HAP-1 (cell line): ENCODE measurements at regions of chr11 and their contacts with region 1.

Region 1: DNA sequence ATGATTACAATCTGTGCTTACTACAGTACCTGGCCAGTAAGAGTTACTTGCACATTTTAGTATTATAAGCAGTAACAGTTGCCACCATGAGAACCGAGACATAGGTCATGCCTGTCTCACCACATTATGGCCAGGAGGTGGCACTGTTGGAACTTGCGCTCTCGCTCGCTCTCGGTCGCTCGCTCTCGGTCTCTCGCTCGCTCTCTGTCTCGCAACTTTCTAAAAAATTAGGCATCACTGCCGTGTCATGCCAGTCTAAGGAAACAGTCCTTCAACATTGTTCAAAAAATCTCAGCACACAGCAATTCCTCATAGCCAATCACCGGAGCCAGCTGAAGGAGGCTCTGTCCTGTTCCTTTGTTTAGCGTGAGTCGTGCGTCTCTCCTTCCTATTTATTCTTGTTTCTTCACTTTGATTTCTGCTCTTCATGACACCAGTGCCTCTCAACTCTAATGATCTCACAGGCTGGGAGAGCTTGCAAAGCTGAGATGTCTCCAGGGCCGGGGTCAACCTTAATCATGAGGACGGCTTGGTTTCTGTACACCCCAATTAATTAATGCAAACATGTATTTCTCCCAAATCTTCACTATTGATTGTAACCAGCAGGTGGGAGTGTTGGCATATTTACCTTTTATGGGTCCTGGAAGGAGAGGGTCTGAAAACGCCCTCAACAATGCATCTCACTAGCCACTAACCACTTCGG is 6.3 kb upstream of the ADAMTS8 start:
- DNase-seq: peak; percentile 74 to 75
- H3K4me3 ChIP-seq: peak overlapping the region; percentile 34
- H3K4me1 ChIP-seq: 0 out of 2 replicates have a peak, but pooled peaks cover 3% of the 10 kb centered on the region
- H3K27me3 ChIP-seq: peaks cover 16% of the 10 kb centered on the region

Region 2: DNA sequence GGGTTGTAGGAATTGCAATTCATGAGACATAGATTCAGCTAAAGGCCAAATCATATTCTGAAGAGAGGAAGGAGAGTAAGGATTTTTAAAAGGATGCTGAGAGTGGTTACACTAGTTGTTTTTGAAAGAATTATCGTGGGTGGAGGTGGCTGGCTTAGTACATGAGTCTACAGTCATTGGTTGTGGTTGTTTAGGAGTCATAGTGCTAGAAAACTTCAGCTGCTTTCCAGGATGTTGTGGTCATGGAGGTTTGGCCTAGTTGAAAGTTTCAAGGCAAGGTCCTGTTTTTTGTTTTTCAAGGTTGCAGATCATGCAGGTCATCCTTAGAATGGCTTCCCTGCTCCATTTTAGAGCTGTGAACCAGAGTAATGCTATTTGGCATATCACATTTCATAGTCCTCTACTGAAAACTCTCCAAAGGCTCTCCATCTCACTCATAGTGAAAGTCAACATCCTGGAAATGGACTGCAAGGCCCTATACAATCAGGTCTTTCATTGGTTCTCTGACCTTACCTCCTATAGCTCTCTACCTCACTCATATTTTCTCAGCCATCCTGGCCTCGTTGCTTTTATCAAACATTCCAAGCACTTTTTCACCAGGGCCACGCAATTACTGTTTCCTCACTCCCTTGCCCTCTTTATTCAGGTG is 93.9 kb before region 1 on chr11:
- in situ Hi-C with region 1: no loop called
- DNase-seq: no peak
- H3K4me3 ChIP-seq: no peak overlapping the region
- H3K4me1 ChIP-seq: no peaks in the 10 kb centered on the region
- H3K27me3 ChIP-seq: no peaks in the 10 kb centered on the region

Region 3: GRCh38 chr11:130861902-130862860 is 427.5 kb after region 1 on chr11:
- in situ Hi-C with region 1: loop called (anchors 5 kb)
- DNase-seq: peak; percentile 48 to 93
- H3K4me3 ChIP-seq: no peak overlapping the region
- H3K4me1 ChIP-seq: no peaks in the 10 kb centered on the region
- H3K27me3 ChIP-seq: no peaks in the 10 kb centered on the region